ENCODE measurements at regions of chr3 and their contacts with region 1.

Region 1: DNA sequence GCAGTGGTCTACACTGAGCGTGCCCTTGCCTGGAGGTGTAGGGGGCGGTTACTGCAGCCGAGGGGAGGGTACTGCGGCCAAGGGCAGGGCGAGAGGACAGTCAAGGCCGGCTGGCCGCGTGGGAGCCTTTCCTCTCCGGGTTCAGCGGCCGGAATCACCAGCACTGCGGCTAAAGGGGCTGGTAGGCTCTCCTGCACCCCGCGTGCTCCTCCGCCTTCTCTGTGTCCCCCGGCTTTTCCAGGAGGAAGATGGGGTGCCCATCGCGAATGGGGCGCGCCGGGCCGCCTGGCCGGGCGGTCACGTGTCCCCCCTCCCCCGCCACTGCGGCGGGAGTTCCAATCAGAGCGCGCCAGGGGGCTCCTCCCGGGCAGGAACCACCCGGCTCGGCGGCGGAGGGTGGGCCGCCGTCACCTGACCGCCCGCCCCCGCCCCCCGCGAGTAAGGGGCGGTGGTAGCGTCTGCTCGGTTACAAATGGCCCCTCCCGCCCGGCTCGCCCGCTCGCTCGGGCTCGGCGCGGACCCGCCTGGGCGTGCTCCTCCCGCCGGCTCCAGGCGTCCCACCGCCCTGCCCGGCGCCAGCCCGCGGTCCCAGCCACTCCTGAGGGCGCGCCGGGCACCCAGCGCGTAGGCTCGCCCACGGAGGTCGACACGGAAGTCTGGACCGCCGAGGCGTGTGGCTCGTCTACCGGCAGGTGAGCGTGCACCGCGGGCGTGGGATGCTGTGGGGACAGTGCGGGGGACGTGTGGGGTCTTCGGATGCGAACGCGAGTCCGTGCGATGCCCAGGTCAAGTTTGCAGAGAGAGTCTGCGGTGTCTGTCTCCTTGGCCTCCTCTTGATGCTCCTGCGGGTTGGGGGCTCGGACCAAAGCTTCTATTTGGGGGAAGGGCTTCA is 242.6 kb upstream of the TOPAZ1 start:
- DNase-seq: no peak
- H3K4me3 Mint-ChIP-seq: no peak overlapping the region
- H3K27ac Mint-ChIP-seq: no peak overlapping the region
- H3K4me1 Mint-ChIP-seq: peaks cover 35% of the 10 kb centered on the region
- H3K27me3 Mint-ChIP-seq: peaks cover 75% of the 10 kb centered on the region

Region 2: DNA sequence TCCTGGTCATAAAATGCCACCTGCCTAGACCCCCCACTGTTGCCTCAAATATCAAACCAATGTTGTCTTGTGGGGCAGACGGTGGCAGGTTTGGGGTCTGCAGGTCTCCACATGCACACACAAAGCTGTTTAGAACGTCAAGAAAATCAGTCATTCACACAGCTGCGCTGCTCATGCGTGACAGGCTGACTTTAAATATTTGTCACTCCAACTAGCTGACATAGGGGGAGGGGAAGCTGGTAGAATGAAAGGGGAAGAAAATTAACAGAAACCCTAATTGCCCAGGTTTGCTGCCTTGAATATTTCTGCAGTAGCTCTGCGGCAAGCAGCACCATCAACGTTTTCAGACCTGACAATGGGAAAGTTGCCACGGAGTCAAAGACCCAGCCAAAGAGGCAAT is 106.6 kb before region 1 on chr3:
- intact Hi-C with region 1: loop called (anchors 2 kb)
- DNase-seq: no peak
- H3K4me3 Mint-ChIP-seq: no peak overlapping the region
- H3K27ac Mint-ChIP-seq: no peak overlapping the region
- H3K4me1 Mint-ChIP-seq: peaks cover 6% of the 10 kb centered on the region
- H3K27me3 Mint-ChIP-seq: peaks cover 44% of the 10 kb centered on the region

Region 3: GRCh38 chr3:44021651-44022594 is 22.8 kb after region 1 on chr3:
- intact Hi-C with region 1: loop called (anchors 1 kb)
- DNase-seq: no peak
- H3K4me3 Mint-ChIP-seq: no peak overlapping the region
- H3K27ac Mint-ChIP-seq: no peak overlapping the region
- H3K4me1 Mint-ChIP-seq: no peaks in the 10 kb centered on the region
- H3K27me3 Mint-ChIP-seq: peaks cover 58% of the 10 kb centered on the region

Region 4: DNA sequence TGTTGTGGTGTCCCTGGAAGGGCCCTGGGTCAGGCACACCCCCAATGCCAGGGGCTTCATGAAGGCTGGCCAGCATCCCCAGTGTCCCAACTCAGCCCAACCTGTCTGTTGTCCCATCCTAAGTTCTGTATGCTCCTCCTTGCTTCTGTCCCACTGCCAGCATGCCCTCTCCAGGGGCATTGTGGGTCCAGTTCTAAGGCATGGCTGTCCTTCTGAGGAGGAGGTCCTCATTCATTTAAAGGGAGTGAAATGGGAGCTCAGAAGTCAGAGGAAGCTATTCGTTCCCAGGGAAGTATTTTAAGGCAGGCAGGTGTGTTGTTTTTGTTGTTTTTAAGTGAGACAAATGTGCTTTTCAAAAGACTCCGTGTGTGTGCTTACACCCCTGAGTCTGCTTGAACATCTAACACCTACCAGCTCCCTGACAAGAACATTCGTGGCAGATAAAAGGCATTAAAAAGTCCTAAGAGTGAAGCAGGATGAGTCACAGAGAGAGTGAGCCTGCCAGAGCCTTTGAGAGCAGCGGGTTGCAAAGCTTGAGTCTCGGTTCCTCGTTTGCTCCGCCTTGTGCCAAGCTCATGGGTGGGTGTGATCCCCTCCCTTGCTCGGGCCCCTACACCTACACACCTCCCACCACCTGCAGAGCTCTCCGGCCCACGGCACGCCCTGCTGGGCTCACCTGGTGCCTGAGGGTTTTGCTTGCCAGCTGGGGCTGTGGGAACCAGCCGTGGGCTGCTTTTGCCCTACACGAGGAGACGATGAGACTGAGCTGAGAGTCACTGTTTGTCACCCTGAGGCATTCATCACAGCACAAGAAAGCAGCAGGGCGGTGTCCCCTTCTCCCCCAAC is 59.2 kb after region 1 on chr3:
- intact Hi-C with region 1: loop called (anchors 2 kb)
- DNase-seq: no peak
- H3K4me3 Mint-ChIP-seq: no peak overlapping the region
- H3K27ac Mint-ChIP-seq: no peak overlapping the region
- H3K4me1 Mint-ChIP-seq: peaks cover 5% of the 10 kb centered on the region
- H3K27me3 Mint-ChIP-seq: peaks cover 5% of the 10 kb centered on the region